ENCODE measurements at regions of chr22 and their contacts with region 1.

Region 1: DNA sequence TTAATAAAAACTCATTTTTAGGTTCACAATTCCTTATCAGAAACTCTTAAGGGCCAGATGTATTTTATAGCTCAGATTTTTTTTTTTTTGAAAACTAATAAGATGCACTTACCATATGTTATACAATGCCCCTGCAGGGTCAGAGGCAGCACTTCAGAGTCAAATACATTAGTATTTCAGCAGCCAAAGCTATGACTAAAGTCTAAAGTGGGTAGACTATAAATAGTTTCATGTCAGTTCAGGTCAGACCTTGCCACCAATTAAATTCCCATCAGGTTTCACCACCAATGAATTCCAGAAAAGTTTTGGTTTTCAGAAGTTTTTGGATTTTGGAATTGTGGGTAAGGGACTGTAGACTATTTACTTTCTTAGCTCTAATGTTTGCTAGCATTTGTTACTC is 75.9 kb downstream of the FAM83F start:
- DNase-seq: no peak
- H3K4me3 ChIP-seq: no peak overlapping the region
- H3K27ac ChIP-seq: no peak overlapping the region
- H3K4me1 ChIP-seq: peaks cover 6% of the 10 kb centered on the region
- H3K27me3 ChIP-seq: no peaks in the 10 kb centered on the region
- CTCF ChIP-seq: no peak

Region 2: GRCh38 chr22:39292561-39293098 is 778.1 kb before region 1 on chr22:
- CTCF ChIA-PET with region 1: interaction called, 6 read pairs
- POLR2A ChIA-PET with region 1: interaction called, 11 read pairs
- intact Hi-C with region 1: no loop called
- DNase-seq: peak; percentile 96 to 97
- H3K4me3 ChIP-seq: no peak overlapping the region
- H3K27ac ChIP-seq: peak overlapping the region; percentile 84
- H3K4me1 ChIP-seq: peaks cover 76% of the 10 kb centered on the region
- H3K27me3 ChIP-seq: no peaks in the 10 kb centered on the region
- CTCF ChIP-seq: no peak

Region 3: GRCh38 chr22:40210818-40211217 is 140.1 kb after region 1 on chr22:
- CTCF ChIA-PET with region 1: no interaction called
- POLR2A ChIA-PET with region 1: no interaction called
- intact Hi-C with region 1: no loop called
- DNase-seq: no peak
- H3K4me3 ChIP-seq: no peak overlapping the region
- H3K27ac ChIP-seq: no peak overlapping the region
- H3K4me1 ChIP-seq: no peaks in the 10 kb centered on the region
- H3K27me3 ChIP-seq: no peaks in the 10 kb centered on the region
- CTCF ChIP-seq: no peak

Region 4: GRCh38 chr22:40289991-40290459 is 219.3 kb after region 1 on chr22:
- CTCF ChIA-PET with region 1: no interaction called
- POLR2A ChIA-PET with region 1: no interaction called
- intact Hi-C with region 1: no loop called
- DNase-seq: no peak
- H3K4me3 ChIP-seq: no peak overlapping the region
- H3K27ac ChIP-seq: no peak overlapping the region
- H3K4me1 ChIP-seq: no peaks in the 10 kb centered on the region
- H3K27me3 ChIP-seq: no peaks in the 10 kb centered on the region
- CTCF ChIP-seq: no peak